ENCODE measurements at regions of chr13 and their contacts with region 1.

Region 1: GRCh38 chr13:51286135-51287002 is 53.1 kb upstream of the SERPINE3 start:
- DNase-seq: peak; percentile 87
- ATAC-seq: peak; percentile 90
- H3K4me3 Mint-ChIP-seq: no peak overlapping the region
- H3K27ac Mint-ChIP-seq: no peak overlapping the region
- H3K4me1 Mint-ChIP-seq: peaks cover 2% of the 10 kb centered on the region
- H3K27me3 Mint-ChIP-seq: no peaks in the 10 kb centered on the region

Region 2: DNA sequence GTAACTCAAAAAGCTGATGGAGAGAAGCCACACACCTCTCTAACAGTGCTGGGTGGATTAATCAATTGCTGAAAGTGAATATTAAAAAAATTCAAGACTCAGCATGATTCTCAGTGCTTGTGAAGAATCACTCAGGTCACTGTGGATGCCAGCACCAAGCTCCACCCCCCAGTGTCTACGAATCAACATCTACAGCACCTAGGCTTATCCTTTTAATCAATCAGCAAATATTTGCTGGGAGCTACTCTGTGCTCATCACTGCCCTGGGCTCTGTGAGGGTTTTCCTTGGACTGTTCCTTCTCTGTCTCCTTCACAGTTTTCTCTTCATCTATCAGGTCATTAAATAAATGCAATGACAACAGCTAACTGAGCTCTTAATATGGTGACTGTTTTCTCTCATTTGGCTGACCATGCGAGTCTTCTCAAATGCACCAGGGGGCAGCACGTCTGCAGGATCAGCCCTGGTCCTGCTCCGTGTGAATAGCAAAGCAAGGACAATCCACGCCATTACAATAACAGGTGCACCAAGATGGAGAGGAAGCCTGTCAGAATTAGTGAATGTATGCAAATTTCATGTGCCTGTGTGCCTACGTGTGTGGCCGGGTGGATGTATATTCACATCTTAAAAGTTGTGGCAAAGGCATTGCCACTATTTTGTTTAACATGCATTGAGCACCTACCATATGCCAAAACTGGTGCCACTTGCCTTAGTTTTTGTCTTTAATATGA is 160.7 kb before region 1 on chr13:
- CTCF ChIA-PET with region 1: interaction called, 137 read pairs
- POLR2A ChIA-PET with region 1: no interaction called
- intact Hi-C with region 1: loop called (anchors 1 kb)
- DNase-seq: peak; percentile 74
- ATAC-seq: peak; percentile 82
- H3K4me3 Mint-ChIP-seq: no peak overlapping the region
- H3K27ac Mint-ChIP-seq: no peak overlapping the region
- H3K4me1 Mint-ChIP-seq: peaks cover 11% of the 10 kb centered on the region
- H3K27me3 Mint-ChIP-seq: peaks cover 15% of the 10 kb centered on the region

Region 3: DNA sequence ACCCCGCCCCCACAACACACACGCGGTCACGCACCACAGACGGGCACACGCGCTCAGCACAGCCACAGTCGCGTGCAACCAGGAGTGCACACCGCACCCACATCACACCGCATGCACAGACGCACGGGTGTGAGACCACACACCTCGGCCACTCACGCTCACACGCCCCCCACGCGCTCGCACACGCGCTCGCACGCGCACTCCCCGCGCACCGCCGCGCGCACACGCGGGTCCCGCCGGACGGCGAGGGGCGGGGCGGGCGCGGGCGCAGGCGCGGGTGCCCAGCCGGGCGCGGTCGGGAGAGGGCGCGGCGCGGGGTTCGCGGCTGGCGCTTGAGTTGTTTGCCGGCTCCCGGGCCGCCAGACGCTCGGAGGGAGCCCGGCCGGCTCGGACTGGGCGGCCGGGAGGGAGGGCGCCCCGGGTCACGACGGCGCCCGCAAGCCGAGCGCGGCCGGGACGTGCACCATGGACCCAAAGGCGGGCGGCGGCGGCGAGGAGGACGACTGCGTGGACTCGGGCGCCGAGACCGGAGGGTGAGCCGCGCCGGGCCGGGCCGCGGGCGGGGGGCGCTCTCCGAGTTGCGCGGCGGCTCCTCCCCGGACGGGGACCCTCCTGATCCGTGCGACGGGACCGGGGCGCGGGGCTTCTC is 64.2 kb before region 1 on chr13 and contains the start of gene FAM124A:
- CTCF ChIA-PET with region 1: interaction called, 10 read pairs
- POLR2A ChIA-PET with region 1: no interaction called
- intact Hi-C with region 1: loop called in 1 of 2 experiments (anchors 1 kb)
- DNase-seq: peak; percentile 72
- ATAC-seq: peak; percentile 93
- H3K4me3 Mint-ChIP-seq: peak within 1 kb of the TSS; percentile 71
- H3K27ac Mint-ChIP-seq: no peak within 1 kb of the TSS
- H3K4me1 Mint-ChIP-seq: no peaks in the 10 kb centered on the region
- H3K27me3 Mint-ChIP-seq: peaks cover 43% of the 10 kb centered on the region
- total RNA-seq, gene FAM124A: 0.16 to 0.25 TPM

Region 4: GRCh38 chr13:51271528-51272085 is 14.8 kb before region 1 on chr13:
- CTCF ChIA-PET with region 1: interaction called, 32 read pairs
- POLR2A ChIA-PET with region 1: no interaction called
- intact Hi-C with region 1: no loop called
- DNase-seq: no peak
- ATAC-seq: no peak
- H3K4me3 Mint-ChIP-seq: no peak overlapping the region
- H3K27ac Mint-ChIP-seq: no peak overlapping the region
- H3K4me1 Mint-ChIP-seq: no peaks in the 10 kb centered on the region
- H3K27me3 Mint-ChIP-seq: no peaks in the 10 kb centered on the region

Region 5: GRCh38 chr13:51308781-51309180 is 22.4 kb after region 1 on chr13:
- CTCF ChIA-PET with region 1: interaction called, 10 read pairs
- POLR2A ChIA-PET with region 1: no interaction called
- intact Hi-C with region 1: no loop called
- DNase-seq: no peak
- ATAC-seq: no peak
- H3K4me3 Mint-ChIP-seq: no peak overlapping the region
- H3K27ac Mint-ChIP-seq: no peak overlapping the region
- H3K4me1 Mint-ChIP-seq: no peaks in the 10 kb centered on the region
- H3K27me3 Mint-ChIP-seq: peaks cover 4% of the 10 kb centered on the region

Measured in activated CD4-positive, alpha-beta T cell treated with anti-CD3 and anti-CD28 coated beads for 36 hours (primary cell).